K562 (cell line): ENCODE measurements at regions of chr2 and their contacts with region 1.

Region 1: GRCh38 chr2:204871231-204871953 is 326.1 kb downstream of the PARD3B start:
- DNase-seq: peak in 1 of 4 experiments; percentile 16
- ATAC-seq: no peak
- H3K4me3 ChIP-seq: no peak overlapping the region
- H3K27ac ChIP-seq: no peak overlapping the region
- H3K4me1 ChIP-seq: no peaks in the 10 kb centered on the region
- H3K27me3 ChIP-seq: no peaks in the 10 kb centered on the region
- CTCF ChIP-seq: peak in 1 of 3 experiments; percentile 42; a peak in 2 of 6 replicates
- EP300 ChIP-seq: no peak
- POLR2A ChIP-seq: no peak
- RAD21 ChIP-seq: peak; percentile 40 to 62; a peak in 3 of 4 replicates

Region 2: DNA sequence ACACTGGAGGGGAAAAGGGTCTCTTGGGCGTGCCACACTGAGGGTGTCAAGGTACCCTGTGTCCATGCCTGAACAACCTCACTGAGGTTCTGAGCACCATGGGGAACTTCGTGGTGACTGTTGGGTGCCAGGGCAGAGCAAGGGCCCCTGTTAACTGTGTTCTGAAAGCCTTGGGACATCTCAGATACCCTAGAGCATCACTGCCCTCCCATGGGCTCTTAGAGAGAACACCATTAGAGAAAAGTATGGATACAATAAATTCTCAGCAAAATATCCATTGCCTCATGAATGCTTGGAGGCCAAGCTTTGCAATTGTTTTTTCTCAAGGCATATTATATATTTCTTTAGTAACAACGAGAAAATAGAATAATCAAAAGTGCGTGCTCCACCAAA is 322.4 kb after region 1 on chr2:
- CTCF ChIA-PET with region 1: no interaction called
- POLR2A ChIA-PET with region 1: no interaction called
- in situ Hi-C with region 1: no loop called
- intact Hi-C with region 1: loop called (anchors 5 kb)
- DNase-seq: no peak
- ATAC-seq: no peak
- H3K4me3 ChIP-seq: no peak overlapping the region
- H3K27ac ChIP-seq: no peak overlapping the region
- H3K4me1 ChIP-seq: peaks cover 0 to 5% of the 10 kb centered on the region in 2 experiments; a peak in 2 of 5 replicates
- H3K27me3 ChIP-seq: no peaks in the 10 kb centered on the region
- CTCF ChIP-seq: no peak
- EP300 ChIP-seq: no peak
- POLR2A ChIP-seq: no peak
- RAD21 ChIP-seq: peak in 1 of 2 experiments; percentile 11; a peak in 1 of 4 replicates